Psoas muscle (tissue), 8 donors: ENCODE measurements at regions of chr16 and their contacts with region 1.

Region 1: DNA sequence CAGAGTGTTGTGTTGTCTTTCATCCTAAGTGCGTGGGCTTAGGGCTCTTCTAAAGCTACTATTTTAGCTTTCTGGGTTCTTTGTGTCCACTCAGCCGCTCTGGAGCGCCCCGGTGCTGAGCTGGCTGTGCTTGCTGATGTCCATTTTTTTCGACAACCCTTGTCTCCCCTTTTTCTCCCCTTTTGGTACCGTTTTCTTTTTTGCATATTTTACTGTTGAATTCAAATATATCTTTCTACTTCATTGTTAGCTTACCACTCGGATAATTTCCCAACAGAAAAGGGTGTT is 1.2 kb downstream of the SRRM2 start:
- DNase-seq: no peak
- ATAC-seq: no peak
- H3K4me3 ChIP-seq: peak overlapping the region; percentile 96
- H3K27ac ChIP-seq: peak overlapping the region; percentile 97
- H3K4me1 ChIP-seq: peaks cover 47% of the 10 kb centered on the region
- H3K27me3 ChIP-seq: no peaks in the 10 kb centered on the region
- CTCF ChIP-seq: no peak

Region 2: GRCh38 chr16:2770057-2770951 is 16.6 kb after region 1 on chr16:
- intact Hi-C with region 1: loop called in 1 of 2 experiments (anchors 2 kb)
- DNase-seq: peak in 1 of 2 donors; percentile 50
- ATAC-seq: peak in 2 of 4 donors; percentile 1 to 3
- H3K4me3 ChIP-seq: no peak overlapping the region
- H3K27ac ChIP-seq: no peak overlapping the region
- H3K4me1 ChIP-seq: peaks cover 25% of the 10 kb centered on the region
- H3K27me3 ChIP-seq: no peaks in the 10 kb centered on the region
- CTCF ChIP-seq: no peak